ENCODE measurements at regions of chr4 and their contacts with region 1.

Region 1: GRCh38 chr4:41934815-41935651 is at the start of gene TMEM33:
- DNase-seq: peak; percentile 65
- H3K4me3 Mint-ChIP-seq: peak within 1 kb of the TSS; percentile 98
- H3K27ac Mint-ChIP-seq: peak within 1 kb of the TSS; percentile 93
- H3K4me1 Mint-ChIP-seq: peaks cover 42% of the 10 kb centered on the region
- H3K27me3 Mint-ChIP-seq: no peaks in the 10 kb centered on the region
- total RNA-seq, gene TMEM33: 76.7 and 84.0 TPM in 2 replicates

Region 2: GRCh38 chr4:41525129-41525528 is 409.9 kb before region 1 on chr4:
- intact Hi-C with region 1: no loop called
- DNase-seq: no peak
- H3K4me3 Mint-ChIP-seq: no peak overlapping the region
- H3K27ac Mint-ChIP-seq: no peak overlapping the region
- H3K4me1 Mint-ChIP-seq: no peaks in the 10 kb centered on the region
- H3K27me3 Mint-ChIP-seq: no peaks in the 10 kb centered on the region

Region 3: DNA sequence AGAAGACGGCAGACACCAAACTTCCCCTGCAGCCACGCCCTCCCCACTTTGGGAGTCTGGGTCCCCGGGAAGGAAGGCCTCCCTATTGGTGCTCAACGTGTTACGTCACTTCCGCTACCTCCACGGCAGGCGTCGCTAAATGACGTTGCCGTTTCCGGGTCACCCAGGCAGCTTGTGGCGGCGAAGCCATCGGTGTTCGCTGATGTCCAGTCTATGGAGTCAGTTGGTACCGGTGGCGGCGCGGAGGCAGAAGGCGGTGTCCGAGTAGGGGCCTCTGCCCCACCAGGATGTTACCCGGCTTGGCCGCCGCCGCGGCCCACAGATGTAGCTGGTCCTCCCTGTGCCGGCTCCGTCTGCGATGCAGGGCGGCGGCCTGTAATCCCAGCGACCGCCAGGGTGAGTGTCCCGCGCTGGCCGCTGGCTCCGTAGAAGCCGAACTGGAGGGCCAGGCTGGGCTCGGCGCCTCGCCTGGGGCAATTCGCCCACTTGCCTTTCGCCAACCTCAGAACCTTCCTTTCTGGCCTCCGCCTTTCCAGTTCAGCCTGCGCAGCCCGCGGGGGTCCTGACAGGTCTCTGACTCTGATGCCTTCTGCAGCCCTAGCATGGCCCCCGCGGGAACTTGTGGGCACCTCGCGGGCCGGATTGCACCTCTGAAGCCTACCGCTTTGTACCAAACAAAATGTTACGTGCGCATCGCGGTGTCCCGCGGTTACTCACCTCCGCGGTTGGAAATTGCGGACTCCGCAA is 55.5 kb after region 1 on chr4 and contains the start of gene SLC30A9:
- intact Hi-C with region 1: loop called (anchors 1 kb)
- DNase-seq: peak; percentile 90
- H3K4me3 Mint-ChIP-seq: peak within 1 kb of the TSS; percentile 94
- H3K27ac Mint-ChIP-seq: peak within 1 kb of the TSS; percentile 85
- H3K4me1 Mint-ChIP-seq: peaks cover 18% of the 10 kb centered on the region
- H3K27me3 Mint-ChIP-seq: no peaks in the 10 kb centered on the region
- total RNA-seq, gene SLC30A9: 49.9 and 51.7 TPM in 2 replicates